ENCODE measurements at regions of chr17 and their contacts with region 1.

Region 1: GRCh38 chr17:40287494-40288369 is at the start of gene CDC6:
- DNase-seq: peak; percentile 96 to 100 (median 99)

Region 2: GRCh38 chr17:40203131-40203530 is 84.6 kb before region 1 on chr17:
- intact Hi-C with region 1: loop called (anchors 5 kb)
- DNase-seq: no peak

Region 3: DNA sequence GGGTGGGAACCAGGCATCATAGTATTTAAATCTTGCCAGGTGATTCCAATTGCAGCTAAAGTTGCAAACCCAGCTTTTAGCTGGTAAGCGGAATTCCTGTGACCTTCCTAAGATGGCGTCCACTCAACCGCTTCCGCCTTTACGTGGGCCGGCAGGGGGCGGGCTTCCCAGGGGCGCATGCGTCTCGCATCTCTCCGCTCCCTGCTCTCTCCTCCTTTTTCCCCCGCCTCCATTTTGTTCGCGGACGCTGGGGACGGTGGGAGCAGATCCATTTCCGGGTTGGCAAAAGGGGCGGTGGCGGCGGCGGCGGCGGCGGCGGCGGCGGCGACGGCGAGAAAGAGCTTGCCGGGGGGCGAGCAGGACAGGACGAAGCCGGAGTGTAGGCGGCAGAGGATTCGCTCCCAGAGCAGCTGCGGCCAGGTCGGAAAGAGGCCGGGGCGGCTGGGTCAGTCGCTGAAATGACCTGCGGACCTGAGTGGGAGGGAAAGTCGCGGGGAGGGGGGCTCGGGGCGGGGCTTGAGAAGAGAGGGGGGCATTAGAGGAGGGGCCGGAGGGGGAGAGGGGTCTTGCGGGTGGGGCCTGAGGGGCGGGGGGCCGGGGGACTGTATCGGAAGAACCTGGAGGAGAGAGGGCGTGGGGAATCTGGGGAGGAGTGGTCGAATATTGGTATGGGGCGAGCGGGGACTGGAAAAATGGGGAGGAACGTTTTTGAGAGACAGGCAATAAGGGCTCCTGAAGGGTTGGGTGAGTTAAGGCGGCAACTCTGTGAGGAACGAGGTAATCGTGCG is 68.5 kb before region 1 on chr17 and contains the start of gene WIPF2:
- intact Hi-C with region 1: loop called (anchors 1 kb)
- DNase-seq: peak; percentile 89 to 99 (median 97)

Measured in head of caudate nucleus (tissue), 42 donors.